Activated CD8-positive, alpha-beta memory T cell treated with anti-CD3 and anti-CD28 coated beads, Interleukin-2, amount 10 ng/mL, durations not matched to agents 7 days and 5 days (primary cell): ENCODE measurements at regions of chr1 and their contacts with region 1.

Region 1: DNA sequence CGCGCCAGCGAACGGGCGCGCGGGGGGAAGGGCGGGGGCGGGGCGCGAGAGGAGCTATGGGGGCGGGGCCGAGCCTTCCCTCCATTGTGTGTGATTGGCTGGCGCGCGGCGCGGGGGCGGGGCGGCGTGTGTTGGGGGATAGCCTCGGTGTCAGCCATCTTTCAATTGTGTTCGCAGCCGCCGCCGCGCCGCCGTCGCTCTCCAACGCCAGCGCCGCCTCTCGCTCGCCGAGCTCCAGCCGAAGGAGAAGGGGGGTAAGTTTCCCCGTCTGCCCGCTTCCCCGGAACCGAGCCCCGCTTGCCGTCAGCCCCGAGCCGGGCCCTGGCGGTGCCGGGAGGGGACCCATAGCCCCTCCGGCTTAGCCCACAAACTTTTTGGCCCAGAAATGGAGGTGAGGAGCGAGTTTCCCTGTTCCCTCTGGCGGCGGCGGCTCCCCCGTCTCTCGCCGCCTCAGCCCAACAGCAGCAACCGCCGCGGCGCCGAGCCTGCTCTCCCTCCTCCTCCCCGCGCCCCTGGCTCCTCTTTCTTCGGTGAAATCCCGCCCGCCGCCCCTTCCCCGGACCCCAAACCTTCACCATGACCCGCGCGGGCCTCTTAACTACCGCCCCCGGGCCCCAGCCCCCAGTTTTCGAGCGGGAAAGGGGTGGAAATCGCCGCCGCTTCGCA is at the start of gene H3-3A:
- DNase-seq: peak; percentile 97
- ATAC-seq: peak; percentile 87
- H3K4me3 Mint-ChIP-seq: peak within 1 kb of the TSS; percentile 99
- H3K27ac Mint-ChIP-seq: peak within 1 kb of the TSS; percentile 100
- H3K4me1 Mint-ChIP-seq: peaks cover 33% of the 10 kb centered on the region
- H3K27me3 Mint-ChIP-seq: no peaks in the 10 kb centered on the region
- total RNA-seq, gene H3-3A: 384 to 451 TPM

Region 2: GRCh38 chr1:225299624-225300023 is 763.1 kb before region 1 on chr1:
- CTCF ChIA-PET with region 1: no interaction called
- DNase-seq: no peak
- ATAC-seq: no peak
- H3K4me3 Mint-ChIP-seq: no peak overlapping the region
- H3K27ac Mint-ChIP-seq: no peak overlapping the region
- H3K4me1 Mint-ChIP-seq: no peaks in the 10 kb centered on the region
- H3K27me3 Mint-ChIP-seq: peaks cover 5% of the 10 kb centered on the region

Region 3: GRCh38 chr1:225987491-225988316 is 75.0 kb before region 1 on chr1:
- CTCF ChIA-PET with region 1: interaction called, 17 read pairs
- DNase-seq: no peak
- ATAC-seq: no peak
- H3K4me3 Mint-ChIP-seq: no peak overlapping the region
- H3K27ac Mint-ChIP-seq: no peak overlapping the region
- H3K4me1 Mint-ChIP-seq: peaks cover 32% of the 10 kb centered on the region
- H3K27me3 Mint-ChIP-seq: no peaks in the 10 kb centered on the region

Region 4: DNA sequence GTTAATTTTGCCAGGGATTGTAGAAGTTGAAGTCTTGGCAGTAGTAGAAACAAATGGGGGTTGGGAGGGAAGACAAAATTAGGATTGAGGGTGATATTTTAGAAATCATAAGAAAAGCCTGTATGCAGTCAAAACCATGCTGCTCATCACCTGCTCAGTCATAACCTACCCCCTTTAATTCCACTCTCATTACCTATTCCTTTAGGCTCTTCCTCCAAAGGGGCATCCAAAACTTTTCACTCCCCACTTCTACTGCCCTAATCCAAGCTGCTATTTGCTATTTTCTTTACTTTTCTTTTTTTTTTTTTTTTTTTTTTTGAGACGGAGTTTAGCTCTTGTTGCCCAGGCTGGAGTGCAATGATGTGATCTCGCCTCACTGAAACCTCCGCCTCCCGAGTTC is 11.4 kb after region 1 on chr1:
- CTCF ChIA-PET with region 1: interaction called, 83 read pairs
- DNase-seq: no peak
- ATAC-seq: no peak
- H3K4me3 Mint-ChIP-seq: no peak overlapping the region
- H3K27ac Mint-ChIP-seq: peak overlapping the region; percentile 21
- H3K4me1 Mint-ChIP-seq: peaks cover 9% of the 10 kb centered on the region
- H3K27me3 Mint-ChIP-seq: no peaks in the 10 kb centered on the region

Region 5: DNA sequence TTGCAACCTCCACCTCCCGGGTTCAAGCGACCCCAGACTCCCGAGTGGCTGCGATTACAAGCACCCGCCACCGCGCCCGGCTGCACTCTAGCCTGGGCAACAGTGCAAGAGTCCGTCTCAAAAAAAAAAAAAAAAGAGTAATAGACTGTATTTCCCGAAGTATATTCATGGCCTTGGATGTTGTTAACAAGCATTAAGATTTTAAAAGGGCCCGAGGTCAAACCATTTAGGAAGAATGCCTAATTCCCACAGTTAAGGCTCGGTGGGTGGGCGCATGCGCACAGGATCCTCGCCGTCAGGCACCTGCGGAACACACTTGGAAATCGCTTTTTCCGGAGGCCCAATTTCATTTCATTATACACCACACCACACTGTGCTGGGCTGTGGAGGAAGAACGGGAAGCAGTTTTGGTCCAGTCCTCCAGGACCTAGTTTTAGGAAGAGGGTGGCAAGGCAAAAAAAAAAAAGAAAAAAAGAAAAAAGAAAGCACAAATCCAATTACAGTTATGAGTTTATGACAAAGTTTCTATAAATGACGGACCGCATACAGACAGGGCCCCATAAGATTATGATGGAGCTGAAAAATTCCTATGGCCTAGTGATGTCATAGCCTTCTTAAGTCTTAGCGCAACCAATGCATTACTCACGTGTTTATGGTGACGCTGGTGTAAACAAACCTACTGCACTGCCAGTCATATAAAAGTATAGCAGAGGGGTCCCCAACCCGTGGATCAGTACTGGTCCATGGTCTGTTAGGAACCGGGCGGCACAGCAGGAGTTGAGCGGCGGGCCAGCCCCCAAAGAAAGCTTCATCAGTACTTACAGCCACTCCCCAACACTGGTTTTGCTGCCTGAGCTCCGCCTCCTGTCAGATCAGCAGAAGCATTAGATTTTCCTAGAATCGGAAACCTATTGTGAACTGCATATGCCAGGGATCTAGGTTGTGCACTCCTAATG is 38.0 kb after region 1 on chr1:
- CTCF ChIA-PET with region 1: interaction called, 12 read pairs
- DNase-seq: no peak
- ATAC-seq: peak; percentile 65
- H3K4me3 Mint-ChIP-seq: peak overlapping the region; percentile 78
- H3K27ac Mint-ChIP-seq: no peak overlapping the region
- H3K4me1 Mint-ChIP-seq: peaks cover 11% of the 10 kb centered on the region
- H3K27me3 Mint-ChIP-seq: peaks cover 8% of the 10 kb centered on the region

Region 6: DNA sequence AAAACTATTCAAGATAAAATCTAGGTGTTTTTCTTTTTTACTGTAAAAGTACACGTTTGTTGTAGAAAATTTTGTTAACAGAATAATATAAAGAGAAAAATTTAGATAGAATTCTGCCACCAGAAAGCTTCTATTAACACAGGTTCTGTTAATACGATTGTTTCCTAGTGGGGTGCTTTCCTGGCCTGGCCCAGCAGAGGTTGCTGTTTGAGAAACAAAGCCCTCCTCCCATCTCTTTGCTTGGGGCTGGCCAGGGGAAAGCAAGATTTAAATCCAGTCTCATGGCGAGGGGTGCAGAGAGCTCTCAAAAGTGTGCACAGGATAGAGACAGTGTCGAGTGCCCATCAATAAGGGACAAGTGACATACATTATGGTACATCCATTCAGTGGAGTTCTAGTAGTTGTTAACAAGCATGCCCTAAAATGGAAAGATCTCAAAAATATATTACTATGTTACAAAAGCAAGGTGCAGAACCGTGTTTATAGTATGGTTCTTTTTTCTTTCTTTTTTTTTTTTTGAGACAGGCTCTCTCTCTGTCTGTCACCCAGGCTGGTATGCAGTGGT is 138.4 kb after region 1 on chr1:
- CTCF ChIA-PET with region 1: interaction called, 12 read pairs
- DNase-seq: no peak
- ATAC-seq: no peak
- H3K4me3 Mint-ChIP-seq: no peak overlapping the region
- H3K27ac Mint-ChIP-seq: no peak overlapping the region
- H3K4me1 Mint-ChIP-seq: no peaks in the 10 kb centered on the region
- H3K27me3 Mint-ChIP-seq: peaks cover 16% of the 10 kb centered on the region